HCT116 (cell line): ENCODE measurements at regions of chr4 and their contacts with region 1.

Region 1: DNA sequence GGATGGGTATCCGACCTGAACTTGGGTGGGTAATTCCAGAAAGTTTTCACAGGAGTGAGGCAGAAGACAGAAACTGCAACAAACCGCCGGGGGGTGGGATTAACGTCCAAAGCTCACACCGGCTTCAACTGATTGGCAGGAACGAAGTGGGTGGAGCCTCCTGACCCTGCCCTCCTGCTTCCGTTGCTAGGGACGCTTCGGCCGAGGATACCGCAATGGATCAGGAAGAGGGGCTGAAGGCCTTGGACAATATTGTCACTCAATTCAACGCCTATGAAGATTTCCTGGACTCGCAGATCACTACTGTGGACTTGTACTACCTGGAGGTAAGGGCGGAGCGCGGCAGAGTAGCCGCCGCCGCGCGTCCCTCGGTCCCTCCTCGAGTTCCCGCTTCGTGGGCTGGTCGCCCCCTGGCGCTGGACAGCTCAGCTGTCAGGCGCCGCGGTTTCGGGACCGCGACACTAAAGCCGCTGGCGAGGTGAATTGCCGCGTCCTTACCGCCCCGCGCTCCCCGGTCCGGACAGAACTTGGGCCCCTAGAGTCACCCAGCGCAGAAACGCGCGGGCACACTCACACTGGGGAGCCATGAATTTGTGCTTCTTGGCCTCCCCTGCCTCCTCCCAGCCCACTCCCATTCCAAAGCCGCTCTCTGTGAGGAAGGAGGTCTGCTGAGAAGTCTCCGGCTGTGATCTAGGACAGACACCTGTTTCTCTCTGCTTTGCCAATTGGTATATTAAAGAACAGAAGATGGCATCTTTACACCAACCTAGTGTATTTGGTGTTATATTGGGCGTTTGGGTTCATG is at the start of gene CFAP299:
- DNase-seq: peak; percentile 70
- ATAC-seq: peak; percentile 94
- H3K4me3 ChIP-seq: peak within 1 kb of the TSS; percentile 43 to 56
- H3K27ac ChIP-seq: no peak within 1 kb of the TSS
- H3K4me1 ChIP-seq: peaks cover 0 to 14% of the 10 kb centered on the region in 2 experiments; a peak in 1 of 4 replicates
- H3K27me3 ChIP-seq: peaks cover 41% of the 10 kb centered on the region
- CTCF ChIP-seq: peak; percentile 12 to 50 (median 43); a peak in 4 of 6 replicates
- POLR2A ChIP-seq: no peak
- RAD21 ChIP-seq: peak; percentile 18; the same call in 1 of the 2 replicates
- total RNA-seq, gene CFAP299: not detected

Region 2: GRCh38 chr4:78951862-78952472 is 1383.8 kb before region 1 on chr4:
- CTCF ChIA-PET with region 1: interaction called, 25 read pairs
- POLR2A ChIA-PET with region 1: no interaction called
- RAD21 ChIA-PET with region 1: no interaction called
- intact Hi-C with region 1: loop called (anchors 1 kb)
- DNase-seq: peak; percentile 32
- ATAC-seq: peak; percentile 81
- H3K4me3 ChIP-seq: no peak overlapping the region
- H3K27ac ChIP-seq: no peak overlapping the region
- H3K4me1 ChIP-seq: no peaks in the 10 kb centered on the region
- H3K27me3 ChIP-seq: no peaks in the 10 kb centered on the region
- CTCF ChIP-seq: peak; percentile 55 to 72 (median 57); a peak in 5 of 6 replicates
- POLR2A ChIP-seq: no peak
- RAD21 ChIP-seq: peak; percentile 83

Region 3: GRCh38 chr4:80540785-80541469 is 205.2 kb after region 1 on chr4:
- CTCF ChIA-PET with region 1: no interaction called
- POLR2A ChIA-PET with region 1: no interaction called
- RAD21 ChIA-PET with region 1: no interaction called
- intact Hi-C with region 1: no loop called
- DNase-seq: no peak
- ATAC-seq: no peak
- H3K4me3 ChIP-seq: no peak overlapping the region
- H3K27ac ChIP-seq: no peak overlapping the region
- H3K4me1 ChIP-seq: no peaks in the 10 kb centered on the region
- H3K27me3 ChIP-seq: peaks cover 36% of the 10 kb centered on the region
- CTCF ChIP-seq: no peak
- POLR2A ChIP-seq: no peak
- RAD21 ChIP-seq: no peak